GM10248 (cell line): ENCODE measurements at regions of chr5 and their contacts with region 1.

Region 1: DNA sequence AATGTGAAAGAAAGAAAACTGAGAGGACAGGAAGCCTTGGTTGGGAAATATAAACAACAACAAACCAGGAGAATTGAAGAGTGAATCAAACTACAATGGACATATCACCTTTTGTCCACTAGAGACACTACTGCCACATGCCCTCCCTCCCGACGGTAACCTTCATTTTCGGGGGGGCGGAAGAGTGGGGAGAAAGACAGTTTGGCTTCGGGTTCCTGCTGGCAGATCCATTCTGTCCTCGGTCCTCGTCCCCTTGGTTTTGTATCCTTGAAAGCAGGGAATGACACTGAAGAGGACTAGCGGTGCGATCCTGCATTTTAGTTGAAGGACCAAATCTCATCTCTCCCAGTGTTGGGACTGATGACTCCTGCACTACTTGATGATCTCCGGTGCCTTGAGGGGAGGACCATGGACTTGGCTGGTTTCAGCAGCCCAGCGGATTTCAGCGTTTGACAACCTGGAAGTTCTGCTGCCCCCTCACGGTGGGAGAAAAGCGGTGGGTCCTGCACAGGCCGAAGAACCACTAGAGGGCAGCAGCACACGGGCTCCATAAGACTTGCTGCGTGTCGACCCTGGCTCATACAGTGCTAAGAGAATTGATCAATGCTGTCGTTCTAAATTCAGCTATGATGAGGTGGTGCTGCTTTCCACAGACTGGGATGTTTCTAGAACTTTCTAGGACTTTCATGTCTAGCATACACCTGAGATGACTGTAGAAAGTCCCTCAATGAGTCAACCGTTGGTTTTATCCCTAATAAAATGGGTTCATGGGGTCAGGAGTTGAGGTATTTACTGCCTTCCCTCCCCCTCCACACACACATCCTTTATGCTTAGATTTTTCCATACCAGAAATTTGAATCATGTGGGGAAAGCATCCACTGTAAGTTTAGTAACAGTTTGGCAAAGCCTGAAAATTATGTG is 15.1 kb upstream of the ZNF131 start:
- DNase-seq: peak; percentile 87
- CTCF ChIP-seq: peak; percentile 100

Region 2: DNA sequence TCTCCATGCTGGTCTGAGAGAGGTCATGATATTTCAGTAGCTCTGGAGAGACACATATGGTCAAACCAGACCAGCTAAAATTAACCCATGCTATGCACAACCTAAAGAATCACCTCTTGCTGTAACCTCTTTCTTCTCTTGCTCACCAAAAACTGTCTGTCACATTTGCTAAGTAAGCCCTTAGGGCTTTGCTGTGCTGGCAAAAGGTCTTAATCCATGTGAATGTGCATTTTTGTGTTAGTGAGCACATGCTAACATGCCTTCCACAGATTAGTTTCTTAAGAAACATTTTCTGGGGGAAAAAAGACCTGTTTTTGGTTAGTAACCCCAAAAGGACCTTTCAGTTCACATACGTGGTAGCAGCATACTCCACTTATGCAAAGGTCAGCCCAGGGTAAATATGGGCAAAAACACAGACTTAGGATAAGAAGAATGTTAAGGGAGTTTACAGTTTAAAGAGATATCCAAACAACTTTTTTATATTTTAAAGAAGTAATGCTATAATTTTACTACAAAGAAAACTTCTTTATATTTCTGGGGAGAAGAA is 473.2 kb before region 1 on chr5:
- CTCF ChIA-PET with region 1: no interaction called
- POLR2A ChIA-PET with region 1: no interaction called
- DNase-seq: peak; percentile 14
- CTCF ChIP-seq: no peak

Region 3: GRCh38 chr5:43049236-43049635 is 56.4 kb before region 1 on chr5:
- CTCF ChIA-PET with region 1: interaction called, 10 read pairs
- POLR2A ChIA-PET with region 1: no interaction called
- DNase-seq: no peak
- CTCF ChIP-seq: no peak

Region 4: GRCh38 chr5:43066799-43067741 is 38.6 kb before region 1 on chr5:
- CTCF ChIA-PET with region 1: interaction called, 18 read pairs
- POLR2A ChIA-PET with region 1: no interaction called
- DNase-seq: peak; percentile 74
- CTCF ChIP-seq: no peak

Region 5: DNA sequence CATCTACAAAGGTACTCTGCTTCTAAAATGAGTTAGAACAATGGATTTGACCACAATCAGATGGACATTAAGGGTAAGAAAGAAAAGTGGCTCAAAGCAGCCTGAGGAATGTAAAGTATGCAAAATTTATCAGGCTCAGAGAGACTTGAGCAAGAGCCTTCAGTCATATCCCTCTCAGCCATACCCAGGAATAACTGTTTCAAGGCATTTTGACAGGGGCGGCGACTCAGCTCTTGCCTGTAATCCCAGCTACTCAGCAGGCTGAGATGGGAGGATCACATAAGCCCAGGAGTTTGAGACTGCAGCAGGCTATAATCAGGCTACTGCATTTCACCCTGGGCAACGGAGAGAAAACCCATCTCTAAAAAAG is 26.7 kb before region 1 on chr5:
- CTCF ChIA-PET with region 1: interaction called, 12 read pairs
- POLR2A ChIA-PET with region 1: no interaction called
- DNase-seq: no peak
- CTCF ChIP-seq: no peak

Region 6: GRCh38 chr5:43085453-43085852 is 20.2 kb before region 1 on chr5:
- CTCF ChIA-PET with region 1: interaction called, 41 read pairs
- POLR2A ChIA-PET with region 1: no interaction called
- DNase-seq: no peak
- CTCF ChIP-seq: no peak

Region 7: DNA sequence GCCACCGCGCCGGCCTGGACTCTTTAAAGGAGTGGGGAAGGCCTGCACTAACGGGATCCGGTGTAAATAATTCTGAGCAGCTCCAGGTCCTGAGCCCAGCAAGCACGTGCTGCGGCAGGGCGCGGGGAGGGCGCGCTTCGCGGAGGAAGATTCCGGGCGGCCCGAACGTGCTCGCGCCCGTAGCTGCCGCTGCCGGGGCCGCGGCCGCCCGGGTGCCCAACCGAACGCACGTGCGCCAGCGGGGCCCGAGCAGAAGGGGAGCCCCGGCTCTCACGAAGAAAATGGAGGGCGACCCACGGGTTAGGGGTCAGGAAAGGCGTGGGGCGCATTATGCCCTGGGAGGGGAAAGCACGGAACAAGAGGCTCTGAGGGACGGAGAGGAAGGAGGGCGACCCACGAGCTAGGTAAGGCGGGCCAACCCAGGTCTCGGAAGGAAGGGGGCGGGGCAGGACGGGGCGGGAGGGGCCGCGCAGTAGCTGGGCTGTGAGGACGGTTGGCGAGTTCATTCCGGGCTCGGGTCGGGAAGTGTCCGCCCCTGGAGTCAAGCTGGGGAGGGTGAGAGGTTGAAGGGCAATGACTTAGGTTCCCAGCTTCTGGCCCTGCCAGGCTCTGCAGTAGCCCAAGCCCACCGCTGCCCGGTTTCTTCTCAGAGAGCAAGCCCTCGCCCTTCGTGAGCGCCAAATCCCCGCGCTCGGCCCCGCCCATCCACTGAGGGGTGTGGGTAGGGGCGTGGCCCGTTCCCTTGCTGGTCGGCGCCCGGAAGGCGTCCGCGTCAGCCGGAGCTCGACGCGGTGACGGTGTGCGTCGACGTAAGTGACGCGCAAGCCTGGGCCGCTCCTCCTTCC is 15.3 kb after region 1 on chr5 and contains the start of gene ZNF131:
- CTCF ChIA-PET with region 1: interaction called, 149 read pairs
- POLR2A ChIA-PET with region 1: interaction called, 4 read pairs
- DNase-seq: peak; percentile 96
- CTCF ChIP-seq: no peak

Region 8: DNA sequence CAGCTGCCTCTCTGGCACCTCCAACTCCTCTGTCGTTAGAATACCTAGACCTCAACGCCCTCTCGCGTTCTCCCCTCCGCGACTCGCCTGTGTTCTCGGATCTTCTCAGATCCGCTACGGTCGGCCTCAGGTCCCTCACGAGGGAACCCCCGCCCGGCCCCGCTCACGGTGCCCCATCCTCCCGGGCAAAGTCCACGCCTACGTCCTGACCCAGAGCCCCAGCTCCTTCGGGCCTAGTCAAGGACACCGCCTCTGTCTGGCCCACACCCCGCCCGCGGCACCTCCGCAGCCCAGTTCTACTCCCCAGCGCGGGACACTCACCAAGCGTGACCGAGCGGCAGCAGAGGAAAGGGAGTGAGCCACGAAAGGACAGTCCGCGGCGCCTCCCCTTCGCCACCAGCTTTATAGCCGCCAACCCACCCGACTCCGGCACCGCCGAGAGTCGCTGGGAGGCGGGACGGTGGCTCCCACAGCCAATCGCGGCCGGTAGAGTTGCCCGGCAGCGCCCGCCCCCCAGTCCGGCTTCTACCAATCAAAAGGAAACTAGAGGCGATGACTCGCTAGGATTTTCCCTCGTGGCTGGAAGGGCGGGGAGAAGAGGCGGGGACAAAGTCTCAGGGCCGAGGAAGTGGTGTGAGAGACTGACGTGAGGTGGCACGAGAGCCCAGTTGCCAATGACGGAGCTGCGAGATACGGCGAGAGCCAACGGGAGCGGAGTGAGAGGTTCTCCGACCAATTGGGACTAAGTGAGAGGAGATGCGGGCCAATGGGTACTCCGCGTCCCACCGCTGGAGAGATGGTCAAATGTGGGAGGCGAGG is 207.6 kb after region 1 on chr5 and contains the start of gene HMGCS1:
- CTCF ChIA-PET with region 1: interaction called, 14 read pairs
- POLR2A ChIA-PET with region 1: no interaction called
- DNase-seq: peak; percentile 97
- CTCF ChIP-seq: no peak